Vagina (tissue), 2 donors: ENCODE measurements at regions of chr4 and their contacts with region 1.

Region 1: DNA sequence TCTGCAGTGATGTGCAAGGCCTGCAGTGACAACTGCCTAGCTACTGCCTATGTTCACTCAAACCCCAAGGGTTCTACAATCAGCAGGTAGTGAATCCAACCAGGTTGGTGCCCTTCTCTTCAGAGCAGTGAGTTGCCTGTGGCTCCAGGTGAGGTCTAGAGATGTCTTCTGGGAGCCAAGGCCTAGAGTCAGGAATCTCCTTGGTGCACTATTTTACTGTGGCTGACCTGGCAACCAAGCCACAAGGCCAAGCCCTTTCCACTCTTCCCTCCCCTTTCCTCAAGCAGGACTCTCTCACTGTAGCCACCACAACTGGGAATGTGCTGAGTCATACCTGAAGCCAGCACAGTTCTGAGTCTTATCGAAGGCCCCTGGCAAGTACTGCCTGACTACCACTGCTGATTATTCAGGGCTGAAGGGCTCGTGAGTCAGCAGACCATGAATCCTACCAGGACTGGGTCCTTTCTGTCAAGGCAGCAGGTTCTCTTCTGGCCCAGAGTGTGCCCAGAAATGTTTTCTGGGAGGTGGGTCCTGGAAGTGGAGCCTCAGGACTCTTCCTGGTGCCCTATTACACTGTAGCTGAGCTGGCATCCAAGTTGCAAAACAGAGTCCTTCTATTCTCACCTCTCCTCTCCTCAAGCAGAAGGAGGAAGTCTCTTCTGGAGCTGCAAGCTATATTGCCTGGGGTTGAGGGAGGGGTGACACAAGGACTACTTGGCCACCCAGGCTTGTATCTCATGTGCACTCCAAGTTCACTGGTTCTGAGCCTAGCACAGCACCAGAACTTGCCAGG is 111.6 kb downstream of the BTC start:
- DNase-seq: no peak
- H3K4me3 ChIP-seq: no peak overlapping the region
- H3K27ac ChIP-seq: no peak overlapping the region
- H3K4me1 ChIP-seq: no peaks in the 10 kb centered on the region
- H3K27me3 ChIP-seq: no peaks in the 10 kb centered on the region
- CTCF ChIP-seq: no peak
- POLR2A ChIP-seq: no peak

Region 2: DNA sequence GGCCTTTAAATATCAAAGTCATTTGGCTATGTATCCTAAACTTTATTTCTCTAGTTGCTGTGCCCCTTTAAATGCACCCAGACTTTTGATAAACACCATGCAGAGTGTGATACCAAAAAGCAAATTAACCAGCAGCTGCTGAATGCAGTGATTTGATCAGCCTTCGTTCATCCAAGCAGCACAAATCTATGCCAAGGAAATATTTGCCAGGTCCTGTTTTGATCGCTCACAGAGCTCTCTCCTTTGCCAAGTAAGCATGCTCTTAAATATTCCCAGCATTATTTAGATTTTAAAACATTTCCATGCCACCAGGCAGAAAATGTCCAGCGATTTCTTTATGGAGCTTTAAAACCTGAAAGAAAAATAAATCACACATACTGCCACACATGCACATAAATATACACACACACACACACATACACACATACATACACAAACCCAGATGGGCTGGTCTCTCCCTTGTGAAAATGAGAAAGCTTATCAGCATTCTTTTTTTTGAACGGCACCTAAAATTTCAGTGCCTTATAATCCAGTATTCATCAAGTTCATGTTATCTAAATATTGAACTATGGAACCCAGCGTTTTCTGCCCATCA is 75.9 kb after region 1 on chr4:
- intact Hi-C with region 1: no loop called
- DNase-seq: no peak
- H3K4me3 ChIP-seq: no peak overlapping the region
- H3K27ac ChIP-seq: no peak overlapping the region
- H3K4me1 ChIP-seq: no peaks in the 10 kb centered on the region
- H3K27me3 ChIP-seq: no peaks in the 10 kb centered on the region
- CTCF ChIP-seq: no peak
- POLR2A ChIP-seq: no peak

Region 3: GRCh38 chr4:75644095-75644494 is 961.3 kb after region 1 on chr4:
- intact Hi-C with region 1: loop called (anchors 10 kb)
- DNase-seq: no peak
- H3K4me3 ChIP-seq: no peak overlapping the region
- H3K27ac ChIP-seq: no peak overlapping the region
- H3K4me1 ChIP-seq: no peaks in the 10 kb centered on the region
- H3K27me3 ChIP-seq: no peaks in the 10 kb centered on the region
- CTCF ChIP-seq: no peak
- POLR2A ChIP-seq: no peak